Sciatic nerve (tissue), 2 donors: ENCODE measurements at regions of chr9 and their contacts with region 1.

Region 1: GRCh38 chr9:89375191-89375760 is 57.0 kb downstream of the SECISBP2 start:
- DNase-seq: no peak
- ATAC-seq: no peak

Region 2: DNA sequence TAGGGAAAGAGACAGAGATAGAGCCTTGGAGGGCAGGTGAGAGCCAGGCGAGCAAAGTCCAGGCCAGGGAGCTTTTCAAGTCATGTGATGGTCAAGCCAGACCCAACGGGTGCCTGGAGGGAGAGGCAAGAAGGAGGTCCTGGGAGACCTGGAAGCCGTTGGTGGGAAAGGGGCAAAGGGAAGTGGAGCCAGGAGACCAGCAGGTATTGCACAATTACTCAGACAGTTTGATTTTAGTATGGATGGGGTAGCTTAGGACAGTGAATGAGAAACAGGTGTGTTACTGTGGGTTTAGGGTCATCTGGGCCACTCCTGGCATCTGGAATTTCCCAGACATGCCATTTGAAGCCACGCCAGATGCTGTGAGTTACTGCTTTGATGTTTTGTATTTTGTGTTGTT is 51.9 kb before region 1 on chr9:
- intact Hi-C with region 1: loop called (anchors 10 kb)
- DNase-seq: no peak
- ATAC-seq: no peak